ENCODE measurements at regions of chr14 and their contacts with region 1.

Region 1: GRCh38 chr14:89416002-89416995 is 734 bp downstream of the FOXN3 start:
- DNase-seq: peak; percentile 95 to 98 (median 96)
- H3K4me3 ChIP-seq: peak overlapping the region; percentile 89 to 95 (median 90)
- H3K4me3 Mint-ChIP-seq: peak overlapping the region; percentile 92 to 94
- H3K27ac ChIP-seq: peak overlapping the region; percentile 80 to 92
- H3K27ac Mint-ChIP-seq: peak overlapping the region; percentile 88 to 96 (median 93)
- H3K4me1 ChIP-seq: peaks cover 37 to 55% of the 10 kb centered on the region in 2 donors
- H3K4me1 Mint-ChIP-seq: peaks cover 56% of the 10 kb centered on the region
- H3K27me3 ChIP-seq: no peaks in the 10 kb centered on the region
- H3K27me3 Mint-ChIP-seq: peaks cover 0 to 2% (median 0%) of the 10 kb centered on the region in 3 donors
- CTCF ChIP-seq: no peak

Region 2: GRCh38 chr14:89178802-89179535 is 237.3 kb before region 1 on chr14:
- intact Hi-C with region 1: loop called in 1 of 2 experiments (anchors 5 kb)
- DNase-seq: no peak
- H3K4me3 ChIP-seq: no peak overlapping the region
- H3K4me3 Mint-ChIP-seq: no peak overlapping the region
- H3K27ac ChIP-seq: peak overlapping the region in 1 of 2 donors; percentile 17
- H3K27ac Mint-ChIP-seq: peak overlapping the region in 4 of 7 donors; percentile 2 to 77 (median 36)
- H3K4me1 ChIP-seq: no peaks in the 10 kb centered on the region
- H3K4me1 Mint-ChIP-seq: peaks cover 5% of the 10 kb centered on the region
- H3K27me3 ChIP-seq: no peaks in the 10 kb centered on the region
- H3K27me3 Mint-ChIP-seq: no peaks in the 10 kb centered on the region
- CTCF ChIP-seq: no peak

Region 3: GRCh38 chr14:89365061-89365801 is 51.1 kb before region 1 on chr14:
- intact Hi-C with region 1: loop called in 1 of 2 experiments (anchors 5 kb)
- DNase-seq: peak; percentile 83 to 97 (median 93)
- H3K4me3 ChIP-seq: peak overlapping the region in 1 of 3 experiments; percentile 60
- H3K4me3 Mint-ChIP-seq: peak overlapping the region; percentile 40 to 67
- H3K27ac ChIP-seq: peak overlapping the region; percentile 67 to 92
- H3K27ac Mint-ChIP-seq: peak overlapping the region; percentile 89 to 96 (median 93)
- H3K4me1 ChIP-seq: peaks cover 50 to 55% of the 10 kb centered on the region in 2 donors
- H3K4me1 Mint-ChIP-seq: peaks cover 58% of the 10 kb centered on the region
- H3K27me3 ChIP-seq: no peaks in the 10 kb centered on the region
- H3K27me3 Mint-ChIP-seq: peaks cover 0 to 2% (median 0%) of the 10 kb centered on the region in 3 donors
- CTCF ChIP-seq: no peak

Region 4: GRCh38 chr14:89489761-89490437 is 73.6 kb after region 1 on chr14:
- intact Hi-C with region 1: loop called (anchors 5 kb)
- DNase-seq: no peak
- H3K4me3 ChIP-seq: no peak overlapping the region
- H3K4me3 Mint-ChIP-seq: no peak overlapping the region
- H3K27ac ChIP-seq: no peak overlapping the region
- H3K27ac Mint-ChIP-seq: peak overlapping the region in 4 of 7 donors; percentile 12 to 65 (median 45)
- H3K4me1 ChIP-seq: peaks cover 50 to 55% of the 10 kb centered on the region in 2 donors
- H3K4me1 Mint-ChIP-seq: peaks cover 51% of the 10 kb centered on the region
- H3K27me3 ChIP-seq: no peaks in the 10 kb centered on the region
- H3K27me3 Mint-ChIP-seq: peaks cover 0 to 4% (median 0%) of the 10 kb centered on the region in 3 donors
- CTCF ChIP-seq: no peak

Region 5: GRCh38 chr14:89915114-89915878 is 499.0 kb after region 1 on chr14:
- intact Hi-C with region 1: loop called in 1 of 2 experiments (anchors 10 kb)
- DNase-seq: peak; percentile 47 to 76 (median 57)
- H3K4me3 ChIP-seq: no peak overlapping the region
- H3K4me3 Mint-ChIP-seq: no peak overlapping the region
- H3K27ac ChIP-seq: no peak overlapping the region
- H3K27ac Mint-ChIP-seq: peak overlapping the region in 1 of 7 donors; percentile 44
- H3K4me1 ChIP-seq: peaks cover 5 to 15% of the 10 kb centered on the region in 2 donors
- H3K4me1 Mint-ChIP-seq: peaks cover 12% of the 10 kb centered on the region
- H3K27me3 ChIP-seq: no peaks in the 10 kb centered on the region
- H3K27me3 Mint-ChIP-seq: peaks cover 2 to 5% (median 2%) of the 10 kb centered on the region in 3 donors
- CTCF ChIP-seq: peak; percentile 94

Measured in CD14-positive monocyte (primary cell).